ENCODE measurements at regions of chr19 and their contacts with region 1.

Region 1: GRCh38 chr19:48333467-48334384 is 8.4 kb downstream of the EMP3 start:
- DNase-seq: peak; percentile 89 to 95 (median 91)
- H3K4me3 ChIP-seq: peak overlapping the region; percentile 95
- H3K4me3 Mint-ChIP-seq: peak overlapping the region; percentile 88 to 99 (median 97)
- H3K27ac ChIP-seq: peak overlapping the region; percentile 88
- H3K27ac Mint-ChIP-seq: peak overlapping the region; percentile 93 to 98 (median 96)
- H3K4me1 ChIP-seq: peaks cover 43% of the 10 kb centered on the region
- H3K4me1 Mint-ChIP-seq: peaks cover 43 to 53% (median 49%) of the 10 kb centered on the region in 3 donors
- H3K27me3 ChIP-seq: no peaks in the 10 kb centered on the region
- H3K27me3 Mint-ChIP-seq: no peaks in the 10 kb centered on the region

Region 2: GRCh38 chr19:48321622-48322591 is 11.8 kb before region 1 on chr19:
- CTCF ChIA-PET with region 1: interaction called, 288 read pairs
- POLR2A ChIA-PET with region 1: interaction called, 147 read pairs
- DNase-seq: peak; percentile 99 to 100 (median 100)
- H3K4me3 ChIP-seq: peak overlapping the region; percentile 85
- H3K4me3 Mint-ChIP-seq: peak overlapping the region; percentile 90 to 98 (median 94)
- H3K27ac ChIP-seq: peak overlapping the region; percentile 98
- H3K27ac Mint-ChIP-seq: peak overlapping the region; percentile 98 to 100 (median 100)
- H3K4me1 ChIP-seq: peaks cover 50% of the 10 kb centered on the region
- H3K4me1 Mint-ChIP-seq: peaks cover 53 to 66% (median 58%) of the 10 kb centered on the region in 3 donors
- H3K27me3 ChIP-seq: no peaks in the 10 kb centered on the region
- H3K27me3 Mint-ChIP-seq: no peaks in the 10 kb centered on the region

Region 3: DNA sequence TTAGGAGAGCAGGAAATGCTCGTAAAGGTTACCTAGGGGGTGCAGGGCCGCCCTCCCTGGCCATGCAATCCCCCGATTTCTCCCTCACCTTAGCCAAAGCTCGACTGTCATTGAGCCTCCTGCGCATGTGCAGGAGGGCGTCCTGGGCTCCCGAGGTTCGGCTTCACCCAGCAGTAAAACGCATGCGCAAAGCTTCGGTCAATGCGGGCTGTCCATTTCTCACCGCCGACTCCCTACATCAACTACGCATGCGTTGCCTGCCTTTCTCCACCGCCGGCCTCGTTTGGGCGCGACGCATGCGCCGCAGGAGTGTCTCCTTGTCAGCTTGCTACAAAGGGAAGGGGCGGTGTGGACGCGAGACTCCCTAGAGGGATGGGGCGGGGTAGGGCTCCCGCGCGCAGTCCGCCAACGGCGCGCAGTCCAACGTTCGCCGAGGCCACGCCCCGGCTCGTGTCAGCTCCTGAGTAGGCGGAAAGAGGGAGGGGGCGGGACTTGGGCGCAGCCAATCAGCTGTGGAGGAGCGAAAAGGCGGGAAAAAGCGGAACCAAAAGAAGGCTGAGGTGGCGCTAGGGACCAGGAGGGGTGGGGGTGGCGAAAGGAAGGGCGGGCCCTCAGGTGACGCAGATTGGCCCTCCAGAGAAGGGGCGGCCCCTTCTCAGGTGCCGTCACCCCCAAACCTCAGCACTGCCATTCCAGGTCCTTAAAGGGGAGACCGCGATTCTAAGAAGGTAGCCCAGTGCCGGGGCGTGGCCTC is 30.3 kb after region 1 on chr19 and contains the starts of genes SYNGR4 and TMEM143:
- CTCF ChIA-PET with region 1: interaction called, 18 read pairs
- POLR2A ChIA-PET with region 1: interaction called, 22 read pairs
- DNase-seq: peak; percentile 97 to 100 (median 98)
- H3K4me3 ChIP-seq: peak within 1 kb of the TSS; percentile 99
- H3K4me3 Mint-ChIP-seq: peak within 1 kb of the TSS; percentile 81 to 92 (median 89)
- H3K27ac ChIP-seq: peak within 1 kb of the TSS; percentile 90
- H3K27ac Mint-ChIP-seq: peak within 1 kb of the TSS; percentile 86 to 98 (median 93)
- H3K4me1 ChIP-seq: peaks cover 20% of the 10 kb centered on the region
- H3K4me1 Mint-ChIP-seq: peaks cover 13 to 19% (median 16%) of the 10 kb centered on the region in 3 donors
- H3K27me3 ChIP-seq: no peaks in the 10 kb centered on the region
- H3K27me3 Mint-ChIP-seq: no peaks in the 10 kb centered on the region
- total RNA-seq, gene SYNGR4: not detected
- total RNA-seq, gene TMEM143: 11.4 to 15.8 TPM